WTC11 (cell line): ENCODE measurements at regions of chr1 and their contacts with region 1.

Region 1: GRCh38 chr1:27010989-27011764 is 1.5 kb downstream of the TENT5B start:
- DNase-seq: peak; percentile 92
- ATAC-seq: peak; percentile 16
- H3K4me3 Mint-ChIP-seq: peak overlapping the region; percentile 88
- H3K27ac Mint-ChIP-seq: peak overlapping the region; percentile 92
- H3K4me1 Mint-ChIP-seq: peaks cover 57% of the 10 kb centered on the region
- H3K27me3 Mint-ChIP-seq: no peaks in the 10 kb centered on the region
- CTCF ChIP-seq: no peak

Region 2: GRCh38 chr1:26921540-26922430 is 89.4 kb before region 1 on chr1 and contains the start of gene NUDC:
- CTCF ChIA-PET with region 1: no interaction called
- POLR2A ChIA-PET with region 1: interaction called, 13 read pairs
- DNase-seq: peak; percentile 97
- ATAC-seq: peak; percentile 98
- H3K4me3 Mint-ChIP-seq: peak within 1 kb of the TSS; percentile 90
- H3K27ac Mint-ChIP-seq: peak within 1 kb of the TSS; percentile 89
- H3K4me1 Mint-ChIP-seq: peaks cover 21% of the 10 kb centered on the region
- H3K27me3 Mint-ChIP-seq: peaks cover 2% of the 10 kb centered on the region; the same call in 1 of the 2 replicates
- CTCF ChIP-seq: no peak
- total RNA-seq, gene NUDC: 101 to 118 TPM (median 108 TPM) in 3 replicates

Region 3: DNA sequence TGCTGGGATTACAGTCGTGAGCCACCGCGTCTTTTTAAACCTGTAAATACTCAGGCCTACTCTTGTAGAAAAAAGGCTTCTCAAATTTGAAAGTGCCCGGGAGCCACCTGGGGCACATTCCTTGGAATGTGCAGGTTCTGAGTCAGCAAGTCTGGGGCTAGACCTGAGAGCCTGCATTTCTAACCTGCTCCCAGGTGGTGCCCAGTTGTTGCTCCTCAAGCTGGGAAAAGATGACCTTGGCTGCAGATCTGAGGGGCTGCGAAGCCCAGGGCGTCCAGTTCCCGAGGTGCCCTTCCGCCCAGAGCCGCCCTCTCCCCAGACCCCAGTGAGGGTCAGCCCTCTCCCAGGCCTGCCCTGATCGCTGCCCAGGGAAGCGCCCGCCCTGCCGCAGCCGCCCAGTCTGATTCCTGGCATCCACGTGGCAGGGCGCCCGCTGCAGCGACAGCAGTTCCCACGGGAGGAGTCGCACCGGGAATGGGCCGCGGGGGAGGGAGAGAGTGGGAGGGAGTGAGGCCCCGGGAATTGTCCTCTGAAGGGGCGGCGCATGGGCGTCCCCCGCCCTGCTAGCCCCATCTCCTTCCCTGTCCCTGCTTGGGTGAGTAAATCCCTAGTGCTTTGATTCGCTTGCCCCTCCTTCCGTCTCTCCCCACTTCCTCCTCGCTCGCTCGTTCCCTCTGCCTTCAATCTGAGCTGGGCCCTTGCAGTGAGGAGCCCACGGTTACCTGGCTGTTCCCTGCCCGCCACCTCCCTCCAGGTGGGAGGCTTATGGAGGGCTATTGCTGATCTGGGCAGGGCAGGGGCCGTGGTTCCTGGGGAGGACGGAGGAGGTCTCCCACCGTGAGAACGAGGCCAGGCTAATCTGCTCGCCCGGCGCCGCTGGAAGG is 20.3 kb after region 1 on chr1:
- CTCF ChIA-PET with region 1: interaction called, 10 read pairs
- POLR2A ChIA-PET with region 1: interaction called, 12 read pairs
- DNase-seq: peak; percentile 65
- ATAC-seq: peak; percentile 64
- H3K4me3 Mint-ChIP-seq: peak overlapping the region; percentile 49
- H3K27ac Mint-ChIP-seq: peak overlapping the region; percentile 84
- H3K4me1 Mint-ChIP-seq: peaks cover 38% of the 10 kb centered on the region
- H3K27me3 Mint-ChIP-seq: no peaks in the 10 kb centered on the region
- CTCF ChIP-seq: no peak